Activated CD4-positive, alpha-beta T cell treated with anti-CD3 and anti-CD28 coated beads for 36 hours (primary cell): ENCODE measurements at regions of chr1 and their contacts with region 1.

Region 1: GRCh38 chr1:19240673-19241538 is 10.4 kb downstream of the EMC1 start:
- DNase-seq: peak; percentile 87
- ATAC-seq: peak; percentile 97
- H3K4me3 Mint-ChIP-seq: no peak overlapping the region
- H3K27ac Mint-ChIP-seq: peak overlapping the region; percentile 78
- H3K4me1 Mint-ChIP-seq: no peaks in the 10 kb centered on the region
- H3K27me3 Mint-ChIP-seq: no peaks in the 10 kb centered on the region

Region 2: DNA sequence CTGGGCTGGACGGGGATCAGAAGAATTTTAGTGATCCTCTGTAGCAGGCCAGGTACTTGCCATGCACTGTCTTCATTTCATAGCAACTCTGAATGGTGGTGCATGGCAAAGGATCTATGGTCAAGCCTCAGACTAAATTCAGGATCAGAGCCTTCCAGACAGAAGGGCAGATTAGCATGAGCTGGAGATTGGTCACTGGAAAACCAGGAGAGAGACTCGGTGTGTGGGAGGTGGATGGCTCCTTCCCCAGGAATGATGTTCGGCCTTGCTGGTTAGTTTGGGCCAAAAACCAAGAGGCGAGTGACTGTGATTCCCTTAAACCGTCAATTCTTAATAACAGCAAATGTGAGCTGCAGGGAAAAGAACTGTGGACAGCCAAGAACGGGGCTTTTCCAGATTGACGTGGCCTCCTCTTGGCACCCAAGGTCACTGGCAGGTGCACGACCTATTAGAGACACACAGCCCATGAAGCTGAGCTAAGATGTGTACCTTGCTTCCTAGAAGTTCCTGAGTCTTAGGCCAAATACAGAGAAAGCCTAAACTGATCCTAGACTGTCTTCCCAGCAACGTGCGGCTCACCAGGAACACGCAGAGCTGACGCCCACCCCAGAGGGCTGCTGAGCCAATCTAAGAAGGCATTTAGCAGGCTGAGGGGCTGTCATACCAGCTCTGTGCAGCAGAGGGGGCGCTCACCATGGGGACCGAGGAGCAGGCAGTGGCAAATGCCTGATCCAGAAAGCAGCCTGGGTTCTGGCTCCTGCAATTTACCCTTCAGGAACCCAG is 357.1 kb before region 1 on chr1:
- CTCF ChIA-PET with region 1: interaction called, 3 read pairs
- POLR2A ChIA-PET with region 1: no interaction called
- intact Hi-C with region 1: loop called (anchors 1 kb)
- DNase-seq: peak; percentile 85
- ATAC-seq: peak; percentile 87
- H3K4me3 Mint-ChIP-seq: no peak overlapping the region
- H3K27ac Mint-ChIP-seq: no peak overlapping the region
- H3K4me1 Mint-ChIP-seq: no peaks in the 10 kb centered on the region
- H3K27me3 Mint-ChIP-seq: no peaks in the 10 kb centered on the region

Region 3: DNA sequence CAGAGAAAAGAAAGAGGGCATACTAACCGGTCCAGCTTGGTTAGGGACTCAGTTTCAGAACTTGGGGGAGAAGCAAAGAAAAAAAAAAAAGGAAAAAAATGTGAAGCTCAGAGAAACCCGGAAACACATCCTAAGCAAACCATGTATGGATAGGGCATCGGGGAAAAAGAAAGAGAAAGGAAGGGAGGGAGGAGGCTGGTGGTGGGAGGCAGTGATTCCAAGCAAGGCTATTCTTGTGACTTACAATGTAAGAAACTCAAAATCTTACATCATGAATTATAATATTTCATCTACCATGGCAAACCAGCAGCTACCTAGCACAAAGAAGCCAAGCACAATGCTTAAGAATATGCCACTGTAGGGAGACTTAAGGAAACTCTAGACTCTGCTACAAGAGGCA is 91.2 kb before region 1 on chr1:
- CTCF ChIA-PET with region 1: no interaction called
- POLR2A ChIA-PET with region 1: no interaction called
- intact Hi-C with region 1: loop called in 1 of 2 experiments (anchors 5 kb)
- DNase-seq: no peak
- ATAC-seq: no peak
- H3K4me3 Mint-ChIP-seq: no peak overlapping the region
- H3K27ac Mint-ChIP-seq: no peak overlapping the region
- H3K4me1 Mint-ChIP-seq: no peaks in the 10 kb centered on the region
- H3K27me3 Mint-ChIP-seq: no peaks in the 10 kb centered on the region

Region 4: GRCh38 chr1:19179597-19180264 is 61.2 kb before region 1 on chr1:
- CTCF ChIA-PET with region 1: interaction called, 15 read pairs
- POLR2A ChIA-PET with region 1: no interaction called
- intact Hi-C with region 1: loop called (anchors 1 to 5 kb)
- DNase-seq: peak; percentile 43
- ATAC-seq: peak; percentile 89
- H3K4me3 Mint-ChIP-seq: no peak overlapping the region
- H3K27ac Mint-ChIP-seq: peak overlapping the region; percentile 72
- H3K4me1 Mint-ChIP-seq: peaks cover 29% of the 10 kb centered on the region
- H3K27me3 Mint-ChIP-seq: no peaks in the 10 kb centered on the region

Region 5: DNA sequence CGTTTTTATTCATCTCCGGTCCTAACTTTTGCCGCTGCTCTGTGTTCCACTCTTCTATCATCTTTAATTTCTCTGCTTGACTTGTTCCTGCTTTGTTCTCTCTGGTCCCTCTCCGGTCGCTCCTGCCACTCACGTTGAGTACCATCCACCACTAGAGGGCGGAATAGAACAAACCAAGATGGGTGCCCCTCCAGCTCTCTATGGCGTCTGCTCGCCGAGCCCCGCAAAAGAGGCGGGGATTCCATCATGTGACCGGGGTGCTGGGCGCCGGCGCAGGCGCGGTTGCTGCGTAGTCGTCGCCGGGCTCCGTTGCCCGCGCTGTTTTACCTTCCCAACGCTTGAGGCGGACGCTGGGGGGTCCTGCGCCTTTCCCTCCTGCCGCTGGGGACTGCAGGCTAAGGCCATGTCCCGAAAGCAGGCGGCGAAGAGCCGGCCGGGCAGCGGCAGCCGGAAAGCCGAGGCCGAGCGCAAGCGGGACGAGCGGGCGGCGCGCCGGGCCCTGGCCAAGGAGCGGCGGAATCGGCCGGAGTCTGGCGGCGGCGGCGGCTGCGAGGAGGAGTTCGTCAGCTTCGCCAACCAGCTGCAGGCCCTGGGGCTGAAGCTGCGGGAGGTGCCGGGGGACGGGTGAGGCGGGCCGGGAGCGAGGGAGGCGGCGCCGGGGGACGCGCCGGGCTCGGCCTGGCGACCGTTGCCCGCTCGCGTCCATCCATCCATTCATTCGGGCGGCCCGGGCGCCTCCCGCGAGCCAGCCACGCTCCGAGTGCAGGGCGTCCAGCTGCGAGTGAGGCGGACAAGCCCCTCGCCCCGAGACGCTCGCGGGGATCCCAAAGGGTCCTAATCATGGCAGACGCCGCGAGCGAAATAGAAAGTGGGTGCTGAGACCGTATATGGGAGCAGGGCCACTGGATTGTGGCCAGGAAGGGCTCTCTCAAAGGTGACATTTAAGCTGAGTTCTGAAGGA is 641.5 kb after region 1 on chr1 and contains the start of gene OTUD3:
- CTCF ChIA-PET with region 1: no interaction called
- POLR2A ChIA-PET with region 1: no interaction called
- intact Hi-C with region 1: no loop called
- DNase-seq: peak; percentile 96
- ATAC-seq: peak; percentile 98
- H3K4me3 Mint-ChIP-seq: peak within 1 kb of the TSS; percentile 79
- H3K27ac Mint-ChIP-seq: peak within 1 kb of the TSS; percentile 76
- H3K4me1 Mint-ChIP-seq: peaks cover 36% of the 10 kb centered on the region
- H3K27me3 Mint-ChIP-seq: peaks cover 4% of the 10 kb centered on the region
- total RNA-seq, gene OTUD3: 6.6 to 9.2 TPM